Naive thymus-derived CD4-positive, alpha-beta T cell (primary cell): ENCODE measurements at regions of chr1 and their contacts with region 1.

Region 1: DNA sequence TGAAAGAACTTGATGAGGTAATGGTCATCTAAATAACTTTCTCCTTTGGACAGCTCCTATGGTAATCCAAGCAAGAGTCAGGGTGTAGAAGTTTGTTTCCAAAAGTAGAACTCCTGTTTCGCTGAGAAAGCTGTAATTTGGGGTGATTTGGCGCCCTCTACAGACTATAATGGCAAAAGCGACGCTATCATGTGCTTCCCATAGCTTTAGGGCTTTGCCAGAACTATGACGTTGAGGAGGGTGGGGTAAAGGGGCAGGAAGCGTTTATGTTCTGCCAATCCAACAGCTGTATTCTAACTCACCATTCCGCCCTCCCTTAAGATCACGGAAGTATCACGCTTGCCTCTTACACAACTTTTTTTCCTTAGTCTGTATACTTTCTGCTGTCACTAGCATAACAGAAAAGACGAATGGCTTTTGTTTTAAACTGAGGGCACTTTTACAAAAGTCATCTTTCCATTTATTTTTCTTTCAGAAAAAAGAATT is at the start of gene FMO4:
- DNase-seq: peak; percentile 35 to 94 (median 90)
- ATAC-seq: peak; percentile 100
- H3K4me3 ChIP-seq: peak within 1 kb of the TSS; percentile 26
- H3K4me3 Mint-ChIP-seq: peak within 1 kb of the TSS; percentile 35 to 86 (median 81)
- H3K27ac ChIP-seq: peak within 1 kb of the TSS; percentile 56
- H3K27ac Mint-ChIP-seq: peak within 1 kb of the TSS; percentile 73 to 96 (median 90)
- H3K4me1 ChIP-seq: peaks cover 5 to 7% of the 10 kb centered on the region in 2 donors
- H3K4me1 Mint-ChIP-seq: peaks cover 4 to 34% (median 26%) of the 10 kb centered on the region in 7 donors
- H3K27me3 ChIP-seq: no peaks in the 10 kb centered on the region
- H3K27me3 Mint-ChIP-seq: no peaks in the 10 kb centered on the region
- total RNA-seq, gene FMO4: 1.2 to 3.7 (median 3.3) TPM

Region 2: DNA sequence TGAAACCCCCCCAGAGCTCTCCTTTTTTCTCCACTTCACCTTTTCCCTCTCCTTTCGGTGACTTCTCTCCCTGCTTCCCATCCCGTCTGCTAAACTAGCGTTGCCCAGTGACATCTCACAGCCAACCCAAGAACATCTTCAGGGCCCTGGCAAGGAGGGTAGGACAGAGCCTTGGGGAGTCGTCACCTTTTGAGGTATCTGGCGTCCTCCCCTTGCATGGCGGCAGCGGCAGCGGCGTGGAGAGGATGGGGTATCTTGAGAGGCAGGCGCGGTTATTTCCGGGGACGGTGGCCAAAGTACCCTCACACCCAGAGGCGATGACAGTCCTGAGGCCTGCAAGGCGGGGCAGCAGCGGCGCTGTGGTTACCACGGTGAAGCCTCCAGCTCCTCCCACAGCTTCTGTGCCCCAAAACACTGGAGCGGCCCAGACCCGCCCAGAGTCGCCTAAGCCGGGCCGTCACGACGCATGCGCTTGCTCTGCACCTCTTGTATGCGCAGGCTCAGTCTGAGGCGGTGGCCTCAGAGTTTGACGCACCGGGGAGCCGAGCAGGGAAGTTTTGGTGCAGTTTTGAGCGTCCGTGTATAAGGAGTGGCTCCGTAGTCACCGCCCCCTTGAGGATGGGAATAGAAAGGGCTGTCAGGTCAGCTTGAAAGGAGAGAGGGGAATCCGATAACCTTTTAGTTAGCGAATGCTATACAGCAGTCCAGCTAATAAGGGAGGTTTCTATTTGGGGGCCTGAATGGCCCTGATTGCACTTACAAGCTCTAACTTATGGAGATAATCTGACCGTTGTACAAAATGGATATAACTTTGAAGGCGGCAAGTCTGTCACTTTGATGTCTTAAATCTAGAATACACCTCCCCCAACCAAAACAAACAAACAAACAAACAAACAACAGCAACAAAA is 1239.4 kb before region 1 on chr1 and contains the start of gene KIFAP3:
- CTCF ChIA-PET with region 1: no interaction called
- POLR2A ChIA-PET with region 1: no interaction called
- intact Hi-C with region 1: loop called (anchors 1 to 10 kb)
- DNase-seq: peak; percentile 84 to 94 (median 92)
- ATAC-seq: peak; percentile 96
- H3K4me3 ChIP-seq: peak within 1 kb of the TSS; percentile 76
- H3K4me3 Mint-ChIP-seq: peak within 1 kb of the TSS; percentile 89 to 99 (median 96)
- H3K27ac ChIP-seq: peak within 1 kb of the TSS; percentile 90
- H3K27ac Mint-ChIP-seq: peak within 1 kb of the TSS; percentile 83 to 98 (median 94)
- H3K4me1 ChIP-seq: peaks cover 15 to 37% of the 10 kb centered on the region in 2 donors
- H3K4me1 Mint-ChIP-seq: peaks cover 34 to 65% (median 57%) of the 10 kb centered on the region in 7 donors
- H3K27me3 ChIP-seq: no peaks in the 10 kb centered on the region
- H3K27me3 Mint-ChIP-seq: peaks cover 0 to 3% (median 0%) of the 10 kb centered on the region in 5 donors
- total RNA-seq, gene KIFAP3: 12.8 to 23.8 (median 20.1) TPM

Region 3: DNA sequence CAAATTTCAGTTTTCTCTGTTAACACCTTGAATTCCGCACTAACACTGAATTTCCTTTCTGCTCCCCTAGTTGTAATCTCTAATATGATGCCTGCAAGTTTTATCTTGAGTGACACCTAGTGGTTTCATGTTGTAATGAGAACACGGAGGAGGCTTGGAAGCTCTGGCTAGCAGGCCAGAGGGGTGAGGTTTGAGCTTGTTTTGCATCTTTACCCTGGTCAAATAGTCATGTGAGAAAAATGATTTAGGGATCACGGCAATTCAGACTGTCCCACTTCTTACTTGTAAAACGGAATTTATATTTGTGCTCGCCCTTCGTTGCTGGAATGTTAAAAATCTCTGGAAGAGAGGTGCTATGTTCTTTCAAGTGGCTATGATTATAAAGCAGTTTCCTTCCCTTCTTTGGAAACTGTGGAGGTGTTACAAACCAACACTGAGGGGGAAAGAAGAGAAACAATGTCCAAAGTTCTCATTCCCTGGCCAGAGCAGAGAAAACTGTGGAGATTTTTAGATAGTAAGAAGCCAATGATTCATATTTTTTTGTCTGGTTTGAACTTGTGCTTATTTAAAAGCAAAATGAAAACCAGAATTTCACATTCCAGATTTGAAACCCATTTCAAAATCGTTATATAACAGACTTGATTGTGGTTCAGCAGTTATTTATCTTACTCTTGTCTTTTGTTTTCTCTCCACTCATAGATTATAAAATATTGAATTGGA is 383.9 kb before region 1 on chr1:
- CTCF ChIA-PET with region 1: no interaction called
- POLR2A ChIA-PET with region 1: no interaction called
- intact Hi-C with region 1: loop called in 1 of 2 experiments (anchors 1 kb)
- DNase-seq: peak in 7 of 9 donors; percentile 15 to 43 (median 28)
- ATAC-seq: peak; percentile 66
- H3K4me3 ChIP-seq: no peak overlapping the region
- H3K4me3 Mint-ChIP-seq: no peak overlapping the region
- H3K27ac ChIP-seq: no peak overlapping the region
- H3K27ac Mint-ChIP-seq: no peak overlapping the region
- H3K4me1 ChIP-seq: no peaks in the 10 kb centered on the region
- H3K4me1 Mint-ChIP-seq: no peaks in the 10 kb centered on the region
- H3K27me3 ChIP-seq: no peaks in the 10 kb centered on the region
- H3K27me3 Mint-ChIP-seq: peaks cover 3 to 9% (median 6%) of the 10 kb centered on the region in 5 donors

Region 4: GRCh38 chr1:171188388-171189266 is 125.3 kb before region 1 on chr1:
- CTCF ChIA-PET with region 1: no interaction called
- POLR2A ChIA-PET with region 1: no interaction called
- intact Hi-C with region 1: loop called in 1 of 2 experiments (anchors 2 kb)
- DNase-seq: peak in 7 of 9 donors; percentile 7 to 25 (median 16)
- ATAC-seq: peak; percentile 70
- H3K4me3 ChIP-seq: no peak overlapping the region
- H3K4me3 Mint-ChIP-seq: no peak overlapping the region
- H3K27ac ChIP-seq: no peak overlapping the region
- H3K27ac Mint-ChIP-seq: no peak overlapping the region
- H3K4me1 ChIP-seq: no peaks in the 10 kb centered on the region
- H3K4me1 Mint-ChIP-seq: no peaks in the 10 kb centered on the region
- H3K27me3 ChIP-seq: no peaks in the 10 kb centered on the region
- H3K27me3 Mint-ChIP-seq: peaks cover 13 to 39% (median 19%) of the 10 kb centered on the region in 5 donors

Region 5: GRCh38 chr1:171741872-171742576 is 428.1 kb after region 1 on chr1 and contains the start of gene VAMP4:
- CTCF ChIA-PET with region 1: no interaction called
- POLR2A ChIA-PET with region 1: no interaction called
- intact Hi-C with region 1: loop called in 1 of 2 experiments (anchors 10 kb)
- DNase-seq: peak; percentile 78 to 90 (median 87)
- ATAC-seq: peak; percentile 90
- H3K4me3 ChIP-seq: peak within 1 kb of the TSS; percentile 95
- H3K4me3 Mint-ChIP-seq: peak within 1 kb of the TSS; percentile 97 to 100 (median 99)
- H3K27ac ChIP-seq: peak within 1 kb of the TSS; percentile 95
- H3K27ac Mint-ChIP-seq: peak within 1 kb of the TSS; percentile 98 to 100 (median 100)
- H3K4me1 ChIP-seq: peaks cover 30 to 34% of the 10 kb centered on the region in 2 donors
- H3K4me1 Mint-ChIP-seq: peaks cover 25 to 62% (median 57%) of the 10 kb centered on the region in 7 donors
- H3K27me3 ChIP-seq: no peaks in the 10 kb centered on the region
- H3K27me3 Mint-ChIP-seq: no peaks in the 10 kb centered on the region
- total RNA-seq, gene VAMP4: 16.2 to 27.2 (median 19.7) TPM

Region 6: DNA sequence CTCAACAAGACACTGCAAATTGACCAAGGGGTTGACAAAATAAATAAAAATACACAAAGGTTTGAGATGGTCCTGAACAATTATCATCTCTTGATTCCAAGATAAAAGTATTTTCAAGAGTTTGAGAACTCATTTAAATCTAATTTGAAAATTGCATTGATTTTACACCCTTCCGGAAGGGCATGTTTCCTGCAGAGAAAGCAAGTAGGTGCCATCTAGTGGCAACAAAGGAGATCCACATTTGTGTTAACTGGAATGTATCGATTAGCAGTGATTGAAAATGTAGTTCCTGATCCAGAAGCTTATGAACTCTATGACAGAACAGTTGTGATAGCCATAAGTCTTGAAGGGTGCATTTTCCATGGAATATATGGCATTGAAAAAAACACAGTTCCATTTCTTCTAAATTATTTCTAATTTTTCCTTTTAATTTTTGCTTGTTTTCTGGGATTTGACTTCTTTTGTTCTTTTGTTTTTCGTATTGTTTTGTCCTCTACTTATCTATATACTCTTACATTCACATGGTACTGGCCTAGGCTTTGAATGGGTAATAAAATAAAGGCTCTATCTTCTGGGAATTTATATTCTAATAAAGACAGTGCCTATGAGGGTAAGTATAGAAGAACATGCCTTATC is 671.1 kb after region 1 on chr1:
- CTCF ChIA-PET with region 1: no interaction called
- POLR2A ChIA-PET with region 1: no interaction called
- intact Hi-C with region 1: loop called in 1 of 2 experiments (anchors 5 kb)
- DNase-seq: peak in 7 of 9 donors; percentile 15 to 53 (median 39)
- ATAC-seq: peak; percentile 50
- H3K4me3 ChIP-seq: no peak overlapping the region
- H3K4me3 Mint-ChIP-seq: no peak overlapping the region
- H3K27ac ChIP-seq: no peak overlapping the region
- H3K27ac Mint-ChIP-seq: no peak overlapping the region
- H3K4me1 ChIP-seq: no peaks in the 10 kb centered on the region
- H3K4me1 Mint-ChIP-seq: peaks cover 0 to 3% (median 0%) of the 10 kb centered on the region in 7 donors
- H3K27me3 ChIP-seq: no peaks in the 10 kb centered on the region
- H3K27me3 Mint-ChIP-seq: peaks cover 0 to 17% (median 0%) of the 10 kb centered on the region in 5 donors